ENCODE measurements at regions of chr4 and their contacts with region 1.

Region 1: DNA sequence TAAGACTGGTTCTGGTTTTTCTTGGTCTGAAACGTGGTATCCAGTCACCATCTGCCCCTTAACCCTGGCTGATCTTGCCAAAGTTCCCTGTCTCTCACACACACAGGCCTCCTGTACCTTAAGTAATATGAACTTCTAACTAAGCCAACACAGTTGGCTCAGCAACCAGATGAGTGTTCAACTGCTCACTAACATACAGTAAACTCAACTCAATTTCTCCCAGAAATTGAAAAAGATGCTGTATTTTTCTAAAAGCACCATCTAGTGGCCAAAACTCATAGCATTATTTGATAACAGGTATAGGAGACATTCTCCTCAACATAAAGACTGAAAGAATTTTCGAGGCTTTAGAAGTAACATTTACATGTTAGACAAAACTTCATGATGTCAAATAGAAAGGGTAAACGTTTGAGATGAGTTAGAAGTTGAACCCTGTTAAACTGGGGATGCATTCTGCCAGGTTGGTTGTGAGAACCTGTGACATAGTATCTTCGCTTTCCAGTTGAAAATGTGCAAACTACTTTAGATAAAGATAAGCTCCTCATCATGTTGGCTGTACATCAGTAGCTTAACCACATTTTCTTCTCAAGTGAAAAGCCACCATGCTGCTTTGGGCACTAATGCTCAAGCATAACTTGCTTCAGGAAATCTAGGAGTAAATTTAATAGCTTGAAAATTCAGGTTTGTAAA is 31.2 kb downstream of the CCNI start:
- DNase-seq: peak in 7 of 9 donors; percentile 20 to 55 (median 43)
- ATAC-seq: peak; percentile 61
- H3K4me3 ChIP-seq: no peak overlapping the region
- H3K4me3 Mint-ChIP-seq: no peak overlapping the region
- H3K27ac ChIP-seq: no peak overlapping the region
- H3K27ac Mint-ChIP-seq: peak overlapping the region in 8 of 9 donors; percentile 19 to 93 (median 52)
- H3K4me1 ChIP-seq: peaks cover 0 to 8% of the 10 kb centered on the region in 2 donors
- H3K4me1 Mint-ChIP-seq: peaks cover 9 to 34% (median 23%) of the 10 kb centered on the region in 7 donors
- H3K27me3 ChIP-seq: no peaks in the 10 kb centered on the region
- H3K27me3 Mint-ChIP-seq: no peaks in the 10 kb centered on the region

Region 2: GRCh38 chr4:76067652-76068286 is 976.8 kb before region 1 on chr4:
- CTCF ChIA-PET with region 1: no interaction called
- POLR2A ChIA-PET with region 1: no interaction called
- intact Hi-C with region 1: no loop called
- DNase-seq: peak; percentile 30 to 72 (median 61)
- ATAC-seq: peak; percentile 93
- H3K4me3 ChIP-seq: no peak overlapping the region
- H3K4me3 Mint-ChIP-seq: no peak overlapping the region
- H3K27ac ChIP-seq: no peak overlapping the region
- H3K27ac Mint-ChIP-seq: no peak overlapping the region
- H3K4me1 ChIP-seq: no peaks in the 10 kb centered on the region
- H3K4me1 Mint-ChIP-seq: no peaks in the 10 kb centered on the region
- H3K27me3 ChIP-seq: no peaks in the 10 kb centered on the region
- H3K27me3 Mint-ChIP-seq: peaks cover 0 to 7% (median 0%) of the 10 kb centered on the region in 5 donors

Region 3: DNA sequence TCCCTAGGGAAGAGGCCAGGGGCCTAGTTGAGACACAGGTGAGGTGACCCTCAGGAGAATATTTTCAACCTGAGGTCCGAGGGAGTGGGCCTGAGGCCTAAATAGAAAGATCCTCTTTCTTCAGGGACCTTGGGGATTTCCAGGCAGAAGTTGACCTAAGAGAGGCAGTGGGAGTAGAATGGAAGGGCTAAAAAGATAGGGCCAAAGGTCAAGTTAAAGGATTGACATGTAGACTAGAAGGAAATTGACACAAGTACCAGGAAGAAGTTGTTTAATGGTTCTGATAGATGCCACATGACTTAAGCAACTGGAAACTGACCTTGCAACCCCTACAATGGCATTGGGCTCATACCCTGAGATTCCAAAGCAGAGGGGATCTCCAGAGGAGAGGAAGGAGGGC is 532.7 kb before region 1 on chr4:
- CTCF ChIA-PET with region 1: no interaction called
- POLR2A ChIA-PET with region 1: no interaction called
- intact Hi-C with region 1: loop called in 1 of 2 experiments (anchors 1 kb)
- DNase-seq: no peak
- ATAC-seq: no peak
- H3K4me3 ChIP-seq: no peak overlapping the region
- H3K4me3 Mint-ChIP-seq: no peak overlapping the region
- H3K27ac ChIP-seq: no peak overlapping the region
- H3K27ac Mint-ChIP-seq: no peak overlapping the region
- H3K4me1 ChIP-seq: no peaks in the 10 kb centered on the region
- H3K4me1 Mint-ChIP-seq: no peaks in the 10 kb centered on the region
- H3K27me3 ChIP-seq: no peaks in the 10 kb centered on the region
- H3K27me3 Mint-ChIP-seq: peaks cover 0 to 6% (median 4%) of the 10 kb centered on the region in 5 donors

Region 4: GRCh38 chr4:76799140-76799539 is 245.5 kb before region 1 on chr4:
- CTCF ChIA-PET with region 1: no interaction called
- POLR2A ChIA-PET with region 1: no interaction called
- intact Hi-C with region 1: loop called in 1 of 2 experiments (anchors 10 kb)
- DNase-seq: no peak
- ATAC-seq: no peak
- H3K4me3 ChIP-seq: no peak overlapping the region
- H3K4me3 Mint-ChIP-seq: no peak overlapping the region
- H3K27ac ChIP-seq: no peak overlapping the region
- H3K27ac Mint-ChIP-seq: no peak overlapping the region
- H3K4me1 ChIP-seq: no peaks in the 10 kb centered on the region
- H3K4me1 Mint-ChIP-seq: no peaks in the 10 kb centered on the region
- H3K27me3 ChIP-seq: no peaks in the 10 kb centered on the region
- H3K27me3 Mint-ChIP-seq: peaks cover 0 to 26% (median 0%) of the 10 kb centered on the region in 5 donors

Region 5: GRCh38 chr4:76993787-76994641 is 50.6 kb before region 1 on chr4:
- CTCF ChIA-PET with region 1: interaction called, 6 read pairs
- POLR2A ChIA-PET with region 1: interaction called, 9 read pairs
- intact Hi-C with region 1: loop called in 1 of 2 experiments (anchors 1 kb)
- DNase-seq: peak in 8 of 9 donors; percentile 42 to 90 (median 86)
- ATAC-seq: peak; percentile 82
- H3K4me3 ChIP-seq: peak overlapping the region; percentile 52
- H3K4me3 Mint-ChIP-seq: peak overlapping the region; percentile 56 to 94 (median 79)
- H3K27ac ChIP-seq: peak overlapping the region; percentile 19
- H3K27ac Mint-ChIP-seq: peak overlapping the region; percentile 73 to 97 (median 84)
- H3K4me1 ChIP-seq: peaks cover 28 to 50% of the 10 kb centered on the region in 2 donors
- H3K4me1 Mint-ChIP-seq: peaks cover 39 to 84% (median 59%) of the 10 kb centered on the region in 7 donors
- H3K27me3 ChIP-seq: no peaks in the 10 kb centered on the region
- H3K27me3 Mint-ChIP-seq: peaks cover 0 to 27% (median 0%) of the 10 kb centered on the region in 5 donors

Region 6: GRCh38 chr4:77095101-77095821 is 50.7 kb after region 1 on chr4:
- CTCF ChIA-PET with region 1: interaction called, 3 read pairs
- POLR2A ChIA-PET with region 1: interaction called, 3 read pairs
- intact Hi-C with region 1: loop called in 1 of 2 experiments (anchors 1 kb)
- DNase-seq: peak; percentile 46 to 67 (median 59)
- ATAC-seq: peak; percentile 98
- H3K4me3 ChIP-seq: no peak overlapping the region
- H3K4me3 Mint-ChIP-seq: no peak overlapping the region
- H3K27ac ChIP-seq: no peak overlapping the region
- H3K27ac Mint-ChIP-seq: no peak overlapping the region
- H3K4me1 ChIP-seq: peaks cover 0 to 2% of the 10 kb centered on the region in 2 donors
- H3K4me1 Mint-ChIP-seq: peaks cover 8 to 20% (median 16%) of the 10 kb centered on the region in 7 donors
- H3K27me3 ChIP-seq: no peaks in the 10 kb centered on the region
- H3K27me3 Mint-ChIP-seq: no peaks in the 10 kb centered on the region

Region 7: DNA sequence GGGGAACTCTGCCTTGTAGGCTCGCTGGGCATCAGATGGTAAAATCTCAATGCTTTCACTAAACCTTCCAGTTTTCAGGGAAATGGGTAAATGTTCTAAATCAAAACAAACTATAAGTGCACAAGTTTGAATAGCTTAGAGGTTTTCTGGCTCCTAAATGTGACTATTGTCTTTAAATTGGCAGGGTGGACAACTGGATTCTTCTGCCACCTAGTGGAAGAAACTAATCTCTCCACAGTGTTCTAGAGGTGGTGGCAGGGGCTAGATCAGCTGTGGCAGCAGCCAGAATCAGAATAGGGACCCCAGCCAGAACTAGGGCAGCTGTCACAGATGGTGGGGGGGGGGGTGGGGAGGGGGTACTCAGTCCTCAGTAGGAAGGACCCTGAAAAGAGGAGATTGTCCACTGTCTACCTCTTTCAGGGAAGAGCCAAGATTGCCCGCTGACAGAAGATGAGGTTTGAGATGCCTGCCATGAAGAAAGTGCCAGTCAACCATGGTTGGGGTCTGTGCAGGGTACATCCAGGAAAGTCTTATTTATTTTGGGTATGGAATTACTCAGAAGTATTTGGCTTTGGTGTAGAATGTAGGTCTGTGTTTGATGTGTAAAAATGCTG is 313.8 kb after region 1 on chr4:
- CTCF ChIA-PET with region 1: interaction called, 3 read pairs
- POLR2A ChIA-PET with region 1: no interaction called
- intact Hi-C with region 1: loop called (anchors 2 to 5 kb)
- DNase-seq: peak in 4 of 9 donors; percentile 2 to 25 (median 16)
- ATAC-seq: no peak
- H3K4me3 ChIP-seq: no peak overlapping the region
- H3K4me3 Mint-ChIP-seq: no peak overlapping the region
- H3K27ac ChIP-seq: no peak overlapping the region
- H3K27ac Mint-ChIP-seq: no peak overlapping the region
- H3K4me1 ChIP-seq: no peaks in the 10 kb centered on the region
- H3K4me1 Mint-ChIP-seq: no peaks in the 10 kb centered on the region
- H3K27me3 ChIP-seq: no peaks in the 10 kb centered on the region
- H3K27me3 Mint-ChIP-seq: peaks cover 0 to 10% (median 0%) of the 10 kb centered on the region in 5 donors

Region 8: GRCh38 chr4:77681792-77682191 is 637.2 kb after region 1 on chr4:
- CTCF ChIA-PET with region 1: no interaction called
- POLR2A ChIA-PET with region 1: no interaction called
- intact Hi-C with region 1: no loop called
- DNase-seq: no peak
- ATAC-seq: no peak
- H3K4me3 ChIP-seq: no peak overlapping the region
- H3K4me3 Mint-ChIP-seq: no peak overlapping the region
- H3K27ac ChIP-seq: no peak overlapping the region
- H3K27ac Mint-ChIP-seq: no peak overlapping the region
- H3K4me1 ChIP-seq: no peaks in the 10 kb centered on the region
- H3K4me1 Mint-ChIP-seq: peaks cover 0 to 2% (median 0%) of the 10 kb centered on the region in 7 donors
- H3K27me3 ChIP-seq: no peaks in the 10 kb centered on the region
- H3K27me3 Mint-ChIP-seq: peaks cover 0 to 24% (median 6%) of the 10 kb centered on the region in 5 donors

Measured in naive thymus-derived CD4-positive, alpha-beta T cell (primary cell).